Activated CD4-positive, alpha-beta memory T cell treated with anti-CD3 and anti-CD28 coated beads for 36 hours (primary cell): ENCODE measurements at regions of chr6 and their contacts with region 1.

Region 1: GRCh38 chr6:159693128-159693893 is at the start of gene SOD2:
- DNase-seq: peak; percentile 88
- H3K4me3 Mint-ChIP-seq: peak within 1 kb of the TSS; percentile 94
- H3K27ac Mint-ChIP-seq: peak within 1 kb of the TSS; percentile 93
- H3K4me1 Mint-ChIP-seq: peaks cover 38% of the 10 kb centered on the region
- H3K27me3 Mint-ChIP-seq: no peaks in the 10 kb centered on the region
- total RNA-seq, gene SOD2: 103 to 108 TPM

Region 2: DNA sequence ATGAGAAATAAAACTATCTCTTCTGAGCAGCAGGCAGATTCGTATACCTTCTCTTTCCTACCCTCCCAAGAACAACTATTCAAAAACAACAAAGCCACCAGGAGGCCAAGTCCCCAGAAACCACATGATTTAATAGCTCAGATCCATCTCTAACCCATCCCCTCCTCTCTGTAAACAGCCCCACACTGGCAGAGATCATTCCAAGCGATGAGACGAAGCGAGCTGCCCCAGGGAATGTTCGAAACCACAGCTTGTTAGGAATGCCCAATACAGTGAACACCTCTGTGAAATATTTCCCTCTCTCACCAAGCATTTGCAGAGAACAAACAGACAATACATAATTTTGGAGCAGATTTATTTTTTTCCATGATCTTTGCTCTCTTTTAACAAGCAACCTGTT is 232.1 kb before region 1 on chr6:
- CTCF ChIA-PET with region 1: no interaction called
- POLR2A ChIA-PET with region 1: no interaction called
- intact Hi-C with region 1: no loop called
- DNase-seq: no peak
- H3K4me3 Mint-ChIP-seq: no peak overlapping the region
- H3K27ac Mint-ChIP-seq: no peak overlapping the region
- H3K4me1 Mint-ChIP-seq: no peaks in the 10 kb centered on the region
- H3K27me3 Mint-ChIP-seq: peaks cover 11% of the 10 kb centered on the region

Region 3: GRCh38 chr6:159557031-159557430 is 136.3 kb before region 1 on chr6:
- CTCF ChIA-PET with region 1: no interaction called
- POLR2A ChIA-PET with region 1: no interaction called
- intact Hi-C with region 1: no loop called
- DNase-seq: no peak
- H3K4me3 Mint-ChIP-seq: no peak overlapping the region
- H3K27ac Mint-ChIP-seq: no peak overlapping the region
- H3K4me1 Mint-ChIP-seq: no peaks in the 10 kb centered on the region
- H3K27me3 Mint-ChIP-seq: peaks cover 13% of the 10 kb centered on the region

Region 4: GRCh38 chr6:159726918-159727716 is 33.8 kb after region 1 on chr6 and contains the start of gene WTAP:
- CTCF ChIA-PET with region 1: interaction called, 12 read pairs
- POLR2A ChIA-PET with region 1: interaction called, 55 read pairs
- intact Hi-C with region 1: loop called (anchors 1 kb)
- DNase-seq: peak; percentile 98
- H3K4me3 Mint-ChIP-seq: peak within 1 kb of the TSS; percentile 95
- H3K27ac Mint-ChIP-seq: peak within 1 kb of the TSS; percentile 98
- H3K4me1 Mint-ChIP-seq: peaks cover 47% of the 10 kb centered on the region
- H3K27me3 Mint-ChIP-seq: no peaks in the 10 kb centered on the region
- total RNA-seq, gene WTAP: 87.6 to 90.2 TPM

Region 5: GRCh38 chr6:159789377-159790148 is 96.3 kb after region 1 on chr6 and contains the start of gene TCP1:
- CTCF ChIA-PET with region 1: interaction called, 9 read pairs
- POLR2A ChIA-PET with region 1: interaction called, 30 read pairs
- intact Hi-C with region 1: loop called (anchors 1 kb)
- DNase-seq: peak; percentile 100
- H3K4me3 Mint-ChIP-seq: peak within 1 kb of the TSS; percentile 96
- H3K27ac Mint-ChIP-seq: peak within 1 kb of the TSS; percentile 98
- H3K4me1 Mint-ChIP-seq: peaks cover 64% of the 10 kb centered on the region
- H3K27me3 Mint-ChIP-seq: no peaks in the 10 kb centered on the region
- total RNA-seq, gene TCP1: 429 to 438 TPM

Region 6: GRCh38 chr6:159941286-159942113 is 248.2 kb after region 1 on chr6:
- CTCF ChIA-PET with region 1: no interaction called
- POLR2A ChIA-PET with region 1: no interaction called
- intact Hi-C with region 1: loop called (anchors 2 kb)
- DNase-seq: peak; percentile 49
- H3K4me3 Mint-ChIP-seq: no peak overlapping the region
- H3K27ac Mint-ChIP-seq: no peak overlapping the region
- H3K4me1 Mint-ChIP-seq: peaks cover 3% of the 10 kb centered on the region
- H3K27me3 Mint-ChIP-seq: peaks cover 8% of the 10 kb centered on the region

Region 7: GRCh38 chr6:160462551-160463109 is 769.3 kb after region 1 on chr6:
- CTCF ChIA-PET with region 1: no interaction called
- POLR2A ChIA-PET with region 1: no interaction called
- intact Hi-C with region 1: loop called (anchors 5 kb)
- DNase-seq: peak; percentile 64
- H3K4me3 Mint-ChIP-seq: peak overlapping the region; percentile 42
- H3K27ac Mint-ChIP-seq: peak overlapping the region; percentile 68
- H3K4me1 Mint-ChIP-seq: peaks cover 72% of the 10 kb centered on the region
- H3K27me3 Mint-ChIP-seq: peaks cover 14% of the 10 kb centered on the region